Colonic mucosa (tissue), 4 donors: ENCODE measurements at regions of chr19 and their contacts with region 1.

Region 1: DNA sequence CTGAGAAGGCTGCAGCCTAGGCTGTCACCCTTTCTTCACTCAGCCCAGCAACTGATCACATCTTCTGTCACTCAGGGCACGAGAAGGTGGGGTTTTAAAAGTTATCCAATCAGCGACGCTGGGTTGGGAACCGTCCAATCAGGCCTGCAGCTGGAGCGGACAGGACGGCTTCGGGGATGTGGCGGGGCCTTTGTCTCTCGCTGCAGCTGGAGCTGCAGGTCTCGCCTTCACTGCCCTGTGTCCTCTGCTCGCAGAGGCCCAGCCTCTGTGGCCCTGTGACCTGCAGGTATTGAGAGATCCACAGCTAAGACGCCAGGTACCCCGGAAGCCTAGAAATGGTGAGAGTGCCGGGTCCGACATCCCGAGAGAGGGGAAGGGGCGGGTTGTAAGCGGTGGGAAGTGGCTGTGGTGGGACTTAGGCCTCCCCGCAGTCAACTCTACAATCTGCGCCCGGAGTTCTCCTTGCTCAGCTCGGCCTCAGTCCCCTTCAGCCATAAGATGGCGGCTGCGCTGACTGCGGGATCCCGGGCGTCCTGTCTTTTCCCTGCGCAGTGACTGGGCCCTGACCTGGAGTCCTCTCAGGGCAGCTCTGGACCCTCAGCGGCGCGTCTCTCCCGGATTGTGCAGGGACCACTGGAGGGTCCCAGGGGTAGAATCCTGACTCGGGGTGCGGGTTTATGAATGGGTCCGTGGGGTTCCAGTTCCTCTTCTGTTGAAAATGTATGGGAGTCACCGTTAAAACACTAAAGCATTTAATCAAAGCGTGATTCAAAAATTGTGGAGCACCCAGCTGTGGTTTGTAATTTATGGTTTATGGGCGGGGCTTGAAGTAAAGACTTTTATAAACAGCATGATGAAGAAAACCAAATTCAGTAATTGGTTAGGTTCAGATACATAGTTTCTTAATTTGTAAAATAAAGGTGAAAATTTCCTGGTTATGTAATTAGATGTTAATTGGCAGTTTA is at the start of gene ZNF714:
- DNase-seq: peak; percentile 93
- H3K4me3 ChIP-seq: peak within 1 kb of the TSS; percentile 73
- H3K27ac ChIP-seq: peak within 1 kb of the TSS; percentile 71
- H3K4me1 ChIP-seq: no peaks in the 10 kb centered on the region
- H3K27me3 ChIP-seq: no peaks in the 10 kb centered on the region
- CTCF ChIP-seq: no peak
- total RNA-seq, gene ZNF714: 10.9 to 19.0 TPM

Region 2: DNA sequence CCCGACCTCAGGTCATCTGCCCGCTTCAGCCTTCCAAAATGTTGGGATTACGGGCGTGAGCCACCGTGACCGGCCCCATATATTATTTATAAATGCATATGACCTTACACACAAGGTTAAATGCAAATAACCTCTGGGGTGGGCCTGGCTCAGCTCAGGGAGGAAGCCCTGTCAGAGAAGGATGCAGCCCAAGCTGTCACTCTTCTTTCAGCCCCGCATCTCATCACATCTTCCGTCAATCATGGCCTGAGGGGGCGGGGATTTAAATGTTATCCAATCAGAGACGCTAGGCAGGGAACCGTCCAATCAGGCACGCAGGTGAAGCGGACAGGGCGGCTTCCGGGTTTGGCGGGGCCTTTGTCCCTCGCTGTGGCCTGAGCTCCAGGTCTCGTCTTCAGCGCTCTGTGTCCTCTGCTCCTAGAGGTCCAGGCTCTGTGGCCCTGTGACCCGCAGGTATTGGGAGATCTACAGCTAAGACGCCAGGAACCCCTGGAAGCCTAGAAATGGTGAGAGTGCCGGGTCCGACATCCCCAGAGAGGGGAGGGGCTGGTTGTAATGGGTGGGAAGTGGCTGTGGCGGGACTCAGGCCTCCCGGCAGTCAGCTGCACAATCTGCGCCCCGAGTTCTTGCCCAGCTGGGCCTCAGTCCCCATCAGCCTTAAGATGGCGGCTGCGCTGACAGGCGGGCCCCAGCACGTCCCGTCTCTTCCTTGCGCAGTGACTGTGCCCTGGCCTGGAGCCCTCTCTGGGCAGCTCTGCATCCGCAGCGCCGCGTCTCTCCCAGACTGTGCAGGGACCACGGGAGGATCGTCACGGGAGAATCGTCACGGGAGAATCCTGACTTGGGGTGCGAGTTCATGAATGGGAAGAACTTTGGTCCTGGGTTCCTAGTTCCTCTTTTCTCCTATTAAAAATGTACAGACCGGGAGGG is 61.7 kb before region 1 on chr19 and contains the start of gene ZNF430:
- intact Hi-C with region 1: loop called (anchors 10 kb)
- DNase-seq: peak; percentile 97
- H3K4me3 ChIP-seq: peak within 1 kb of the TSS; percentile 79
- H3K27ac ChIP-seq: peak within 1 kb of the TSS; percentile 79
- H3K4me1 ChIP-seq: peaks cover 4% of the 10 kb centered on the region
- H3K27me3 ChIP-seq: no peaks in the 10 kb centered on the region
- CTCF ChIP-seq: no peak
- total RNA-seq, gene ZNF430: 7.7 to 11.7 TPM

Region 3: DNA sequence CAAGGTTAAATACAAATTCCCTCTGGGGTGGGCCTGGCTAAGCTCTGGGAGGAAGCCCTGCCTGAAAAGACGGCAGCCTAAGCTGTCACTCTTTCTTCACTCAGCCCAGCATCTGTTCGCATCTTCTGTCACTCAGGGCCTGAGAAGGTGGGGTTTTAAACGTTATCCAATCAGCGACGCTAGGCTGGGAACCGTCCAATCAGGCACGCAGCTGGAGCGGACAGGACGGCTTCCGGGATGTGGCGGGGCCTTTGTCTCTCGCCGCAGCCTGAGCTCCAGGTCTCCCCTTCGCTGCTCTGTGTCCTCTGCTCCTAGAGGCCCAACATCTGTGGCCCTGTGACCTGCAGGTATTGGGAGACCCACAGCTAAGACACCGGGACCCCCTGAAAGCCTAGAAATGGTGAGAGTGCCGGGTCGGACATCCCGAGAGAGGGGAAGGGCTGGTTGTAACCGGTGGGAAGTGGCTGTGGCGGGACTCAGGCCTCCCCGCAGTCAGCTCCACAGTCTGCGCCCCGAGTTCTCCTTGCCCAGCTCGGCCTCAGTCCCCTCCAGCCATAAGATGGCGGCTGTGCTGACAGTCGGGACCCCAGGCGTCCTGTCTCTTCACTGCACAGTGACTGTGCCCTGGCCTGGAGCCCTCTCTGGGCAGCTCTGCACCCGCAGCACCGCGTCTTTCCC is 59.6 kb after region 1 on chr19 and contains the start of gene ZNF431:
- intact Hi-C with region 1: loop called (anchors 10 kb)
- DNase-seq: peak; percentile 95
- H3K4me3 ChIP-seq: peak within 1 kb of the TSS; percentile 72
- H3K27ac ChIP-seq: peak within 1 kb of the TSS; percentile 71
- H3K4me1 ChIP-seq: peaks cover 4% of the 10 kb centered on the region
- H3K27me3 ChIP-seq: no peaks in the 10 kb centered on the region
- CTCF ChIP-seq: no peak
- total RNA-seq, gene ZNF431: 7.4 to 12.0 TPM